ENCODE measurements at regions of chr16 and their contacts with region 1.

Region 1: DNA sequence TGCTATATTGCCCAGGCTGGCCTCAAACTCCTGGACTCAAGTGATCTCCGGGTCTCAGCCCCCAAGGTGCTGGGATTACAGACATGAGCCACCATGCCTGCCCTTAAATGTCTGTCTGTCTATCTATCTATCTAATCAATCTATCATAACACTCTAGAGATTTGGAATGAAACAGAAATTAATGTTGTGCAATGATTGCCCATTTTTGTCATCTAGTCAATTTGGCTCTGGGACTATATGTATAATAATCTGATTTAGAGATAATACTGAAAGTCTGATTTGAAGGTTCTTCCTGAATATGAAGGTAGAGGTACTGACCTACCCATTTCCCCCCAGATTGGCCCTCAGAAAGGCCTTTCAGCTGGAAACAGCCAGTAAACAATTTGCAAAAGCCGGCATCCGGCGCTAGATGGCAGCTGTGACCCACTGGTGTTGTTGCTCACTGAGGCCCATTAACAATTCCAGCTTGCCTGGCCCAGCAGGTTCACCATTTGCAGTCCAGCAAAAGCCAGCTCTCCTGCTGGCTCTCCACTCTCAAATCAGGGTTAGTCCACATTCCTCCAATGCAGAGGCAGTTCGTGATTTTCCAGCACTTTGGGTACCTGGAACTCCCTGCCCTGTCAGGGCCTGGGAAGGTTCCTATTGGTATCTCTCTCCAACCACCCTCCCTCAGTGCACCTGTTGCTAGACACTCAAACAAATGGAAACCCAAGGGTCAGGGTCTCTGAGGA is 22.9 kb upstream of the C16orf87 start:
- DNase-seq: peak in 4 of 5 donors; percentile 34 to 55 (median 46)
- H3K4me3 ChIP-seq: no peak overlapping the region
- H3K4me3 Mint-ChIP-seq: no peak overlapping the region
- H3K27ac ChIP-seq: no peak overlapping the region
- H3K27ac Mint-ChIP-seq: no peak overlapping the region
- H3K4me1 ChIP-seq: no peaks in the 10 kb centered on the region
- H3K4me1 Mint-ChIP-seq: peaks cover 0 to 2% (median 0%) of the 10 kb centered on the region in 4 donors
- H3K27me3 ChIP-seq: no peaks in the 10 kb centered on the region
- H3K27me3 Mint-ChIP-seq: peaks cover 1 to 7% of the 10 kb centered on the region in 2 donors

Region 2: DNA sequence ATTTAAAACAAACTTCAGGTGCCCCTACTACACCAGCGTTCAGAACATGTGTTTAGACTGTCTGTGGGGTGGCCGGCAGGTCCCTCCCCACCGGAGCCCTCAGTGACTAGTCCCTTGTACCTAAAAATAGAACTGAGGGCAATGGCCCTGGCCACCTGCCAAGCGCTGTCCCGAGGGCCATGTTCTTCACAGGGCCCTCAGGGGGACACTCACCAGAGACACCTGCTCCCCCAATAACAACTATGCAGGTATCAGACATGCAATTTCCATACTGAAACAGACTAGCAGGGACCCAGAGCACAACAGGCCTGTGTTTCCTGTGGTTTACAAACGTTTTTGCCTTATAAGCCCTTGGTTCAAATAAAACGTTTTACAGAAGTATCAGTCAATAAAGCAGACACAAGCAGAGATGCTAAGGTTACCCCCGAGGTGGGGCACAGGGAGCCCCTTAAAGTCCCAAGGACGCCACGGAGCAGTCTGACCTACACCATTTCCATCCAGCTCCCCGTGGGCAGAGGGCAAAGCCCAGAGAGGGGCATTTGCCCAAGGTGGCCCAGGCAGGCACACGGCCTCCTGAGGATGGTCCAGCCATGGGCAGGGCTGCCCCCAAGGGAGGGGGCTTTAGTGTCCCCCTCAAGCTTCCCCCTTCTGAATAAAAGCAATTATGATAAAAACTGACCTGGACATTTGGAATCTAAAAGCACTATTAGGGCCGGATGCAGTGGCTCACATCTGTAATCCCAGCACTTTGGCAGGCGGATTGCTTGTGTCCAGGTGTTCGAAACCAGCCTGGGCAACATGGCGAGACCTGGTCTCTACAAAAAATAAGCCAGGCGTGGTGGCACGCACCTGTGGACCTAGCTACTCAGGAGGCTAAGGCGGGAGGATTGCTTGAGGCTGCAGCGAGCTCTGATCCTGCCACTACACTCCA is 104.8 kb before region 1 on chr16:
- CTCF ChIA-PET with region 1: no interaction called
- POLR2A ChIA-PET with region 1: no interaction called
- intact Hi-C with region 1: no loop called
- DNase-seq: no peak
- H3K4me3 ChIP-seq: no peak overlapping the region
- H3K4me3 Mint-ChIP-seq: no peak overlapping the region
- H3K27ac ChIP-seq: no peak overlapping the region
- H3K27ac Mint-ChIP-seq: no peak overlapping the region
- H3K4me1 ChIP-seq: no peaks in the 10 kb centered on the region
- H3K4me1 Mint-ChIP-seq: no peaks in the 10 kb centered on the region
- H3K27me3 ChIP-seq: peaks cover 4% of the 10 kb centered on the region
- H3K27me3 Mint-ChIP-seq: peaks cover 1 to 3% of the 10 kb centered on the region in 2 donors

Region 3: GRCh38 chr16:46929378-46930332 is 75.8 kb after region 1 on chr16:
- CTCF ChIA-PET with region 1: interaction called, 14 read pairs
- POLR2A ChIA-PET with region 1: no interaction called
- intact Hi-C with region 1: no loop called
- DNase-seq: peak; percentile 43 to 60 (median 52)
- H3K4me3 ChIP-seq: no peak overlapping the region
- H3K4me3 Mint-ChIP-seq: peak overlapping the region in 2 of 8 donors; percentile 20 to 25
- H3K27ac ChIP-seq: no peak overlapping the region
- H3K27ac Mint-ChIP-seq: peak overlapping the region in 1 of 7 donors; percentile 30
- H3K4me1 ChIP-seq: peaks cover 6% of the 10 kb centered on the region
- H3K4me1 Mint-ChIP-seq: peaks cover 0 to 5% (median 3%) of the 10 kb centered on the region in 4 donors
- H3K27me3 ChIP-seq: no peaks in the 10 kb centered on the region
- H3K27me3 Mint-ChIP-seq: no peaks in the 10 kb centered on the region

Measured in CD4-positive, alpha-beta memory T cell (primary cell).